Calu3 (cell line): ENCODE measurements at regions of chr1 and their contacts with region 1.

Region 1: DNA sequence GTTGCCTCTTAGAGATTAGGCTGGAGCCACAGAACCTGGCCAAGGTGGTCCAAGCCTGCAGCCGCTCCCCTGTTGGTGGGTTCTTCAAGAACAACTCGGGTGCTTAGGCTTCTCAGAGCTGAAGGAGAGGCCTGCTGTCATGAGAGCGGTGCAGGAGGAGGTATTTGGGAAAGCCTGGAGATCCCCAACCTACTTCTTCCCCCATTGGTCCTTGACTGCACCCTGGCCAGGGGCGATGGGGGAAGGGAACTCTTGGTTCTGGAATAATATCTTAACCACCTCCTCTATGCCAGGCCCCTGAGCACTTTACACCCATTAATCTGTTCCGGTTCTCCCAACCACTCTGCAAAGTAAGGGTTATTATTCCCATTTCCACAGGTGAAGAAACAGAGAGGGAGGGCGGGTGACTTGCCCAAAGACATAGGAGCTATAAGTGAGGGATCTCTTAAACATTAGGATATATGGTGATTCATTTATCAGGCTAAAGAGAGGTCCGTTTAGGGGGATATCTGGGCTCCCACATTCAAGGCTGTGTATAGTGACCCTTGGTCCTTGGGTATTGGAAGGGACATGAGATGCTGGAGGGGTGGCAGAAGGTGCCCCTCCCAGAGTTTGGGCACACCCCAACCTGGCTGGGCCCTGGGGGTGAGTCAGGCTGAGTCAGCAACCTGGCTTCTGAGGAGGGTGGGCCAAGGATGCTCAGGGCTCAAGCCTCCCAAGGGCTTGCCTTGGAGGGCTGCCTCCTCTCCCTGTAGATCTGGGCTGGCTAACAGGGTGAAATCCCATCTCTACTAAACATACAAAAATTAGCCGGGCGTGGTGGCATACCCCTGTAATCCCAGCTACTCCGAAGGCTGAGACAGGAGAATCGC is 5.2 kb downstream of the TRNP1 start:
- DNase-seq: no peak
- H3K4me3 Mint-ChIP-seq: peak overlapping the region; percentile 81
- H3K27ac Mint-ChIP-seq: peak overlapping the region; percentile 47
- H3K4me1 Mint-ChIP-seq: peaks cover 23% of the 10 kb centered on the region
- H3K27me3 Mint-ChIP-seq: no peaks in the 10 kb centered on the region
- CTCF ChIP-seq: no peak

Region 2: DNA sequence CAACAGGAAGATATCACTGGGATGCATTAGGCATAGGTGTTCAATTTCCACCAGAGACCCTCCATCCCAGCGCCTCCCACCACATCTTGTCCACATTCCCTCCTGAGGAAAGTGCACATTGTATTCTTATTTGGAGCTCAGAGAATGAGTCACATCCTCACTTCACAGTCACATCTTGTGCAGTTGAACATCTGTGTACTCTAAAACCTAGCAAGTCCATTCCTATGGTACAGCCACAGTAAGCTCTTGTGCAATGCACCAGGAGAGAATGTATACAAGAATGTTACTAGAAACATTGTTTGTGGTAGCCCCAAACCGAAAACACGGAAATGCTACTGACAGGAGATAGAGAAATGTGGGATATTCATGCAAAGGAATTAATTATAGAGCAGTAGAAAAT is 36.8 kb before region 1 on chr1:
- CTCF ChIA-PET with region 1: interaction called, 24 read pairs
- intact Hi-C with region 1: loop called (anchors 2 kb)
- DNase-seq: no peak
- H3K4me3 Mint-ChIP-seq: no peak overlapping the region
- H3K27ac Mint-ChIP-seq: no peak overlapping the region
- H3K4me1 Mint-ChIP-seq: peaks cover 21% of the 10 kb centered on the region
- H3K27me3 Mint-ChIP-seq: no peaks in the 10 kb centered on the region
- CTCF ChIP-seq: no peak

Region 3: GRCh38 chr1:27097484-27097917 is 98.8 kb after region 1 on chr1:
- CTCF ChIA-PET with region 1: interaction called, 6 read pairs
- intact Hi-C with region 1: loop called (anchors 2 kb)
- DNase-seq: peak; percentile 82
- H3K4me3 Mint-ChIP-seq: no peak overlapping the region
- H3K27ac Mint-ChIP-seq: no peak overlapping the region
- H3K4me1 Mint-ChIP-seq: peaks cover 15% of the 10 kb centered on the region
- H3K27me3 Mint-ChIP-seq: no peaks in the 10 kb centered on the region
- CTCF ChIP-seq: peak; percentile 77